ENCODE measurements at regions of chr6 and their contacts with region 1.

Region 1: GRCh38 chr6:26342106-26343004 is 22.6 kb upstream of the BTN3A2 start:
- DNase-seq: peak in 1 of 9 experiments; percentile 37
- ATAC-seq: peak; percentile 18
- H3K4me3 ChIP-seq: peak overlapping the region; percentile 33 to 49
- H3K4me3 Mint-ChIP-seq: peak overlapping the region; percentile 76
- H3K27ac ChIP-seq: peak overlapping the region in 1 of 2 experiments; percentile 52
- H3K27ac Mint-ChIP-seq: peak overlapping the region; percentile 71
- H3K4me1 ChIP-seq: peaks cover 4% of the 10 kb centered on the region
- H3K4me1 Mint-ChIP-seq: peaks cover 6% of the 10 kb centered on the region
- H3K27me3 ChIP-seq: no peaks in the 10 kb centered on the region
- H3K27me3 Mint-ChIP-seq: peaks cover 2% of the 10 kb centered on the region
- CTCF ChIP-seq: no peak

Region 2: GRCh38 chr6:26175428-26176181 is 166.8 kb before region 1 on chr6:
- CTCF ChIA-PET with region 1: no interaction called
- POLR2A ChIA-PET with region 1: no interaction called
- intact Hi-C with region 1: loop called in 1 of 2 experiments (anchors 1 kb)
- DNase-seq: peak in 7 of 9 experiments; percentile 33 to 87 (median 53)
- ATAC-seq: no peak
- H3K4me3 ChIP-seq: no peak overlapping the region
- H3K4me3 Mint-ChIP-seq: peak overlapping the region; percentile 3
- H3K27ac ChIP-seq: no peak overlapping the region
- H3K27ac Mint-ChIP-seq: peak overlapping the region; percentile 63
- H3K4me1 ChIP-seq: peaks cover 26% of the 10 kb centered on the region
- H3K4me1 Mint-ChIP-seq: peaks cover 39% of the 10 kb centered on the region
- H3K27me3 ChIP-seq: no peaks in the 10 kb centered on the region
- H3K27me3 Mint-ChIP-seq: no peaks in the 10 kb centered on the region
- CTCF ChIP-seq: peak; percentile 93

Region 3: GRCh38 chr6:26363882-26364701 is 21.7 kb after region 1 on chr6:
- CTCF ChIA-PET with region 1: interaction called, 18 read pairs
- POLR2A ChIA-PET with region 1: interaction called, 4 read pairs
- intact Hi-C with region 1: no loop called
- DNase-seq: peak in 6 of 9 experiments; percentile 9 to 69 (median 34)
- ATAC-seq: no peak
- H3K4me3 ChIP-seq: peak overlapping the region; percentile 90 to 92
- H3K4me3 Mint-ChIP-seq: no peak overlapping the region
- H3K27ac ChIP-seq: peak overlapping the region; percentile 95
- H3K27ac Mint-ChIP-seq: no peak overlapping the region
- H3K4me1 ChIP-seq: peaks cover 51% of the 10 kb centered on the region
- H3K4me1 Mint-ChIP-seq: peaks cover 53% of the 10 kb centered on the region
- H3K27me3 ChIP-seq: no peaks in the 10 kb centered on the region
- H3K27me3 Mint-ChIP-seq: no peaks in the 10 kb centered on the region
- CTCF ChIP-seq: no peak

Region 4: DNA sequence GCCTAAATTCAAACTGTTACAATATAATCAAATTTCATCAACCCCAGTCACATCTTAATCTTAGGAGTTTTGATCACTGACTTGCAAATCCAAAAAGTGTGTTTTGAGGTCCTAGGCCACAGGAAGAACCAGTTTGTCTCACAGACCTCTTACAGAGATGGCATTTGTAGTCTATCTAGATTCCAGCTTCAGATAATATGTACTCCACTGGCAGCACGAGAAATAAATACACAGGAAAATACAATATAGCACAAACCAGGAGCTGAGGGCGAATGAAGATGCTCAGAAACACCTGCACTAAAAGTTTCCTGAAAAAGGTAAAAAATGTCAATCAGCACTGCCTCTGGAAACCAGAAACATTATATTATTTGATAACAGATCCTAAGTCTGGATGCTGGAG is 97.3 kb after region 1 on chr6:
- CTCF ChIA-PET with region 1: interaction called, 6 read pairs
- POLR2A ChIA-PET with region 1: no interaction called
- intact Hi-C with region 1: loop called in 1 of 2 experiments (anchors 1 kb)
- DNase-seq: peak in 2 of 9 experiments; percentile 20 to 48
- ATAC-seq: no peak
- H3K4me3 ChIP-seq: peak overlapping the region; percentile 84 to 91
- H3K4me3 Mint-ChIP-seq: peak overlapping the region; percentile 100
- H3K27ac ChIP-seq: peak overlapping the region; percentile 95 to 98
- H3K27ac Mint-ChIP-seq: peak overlapping the region; percentile 100
- H3K4me1 ChIP-seq: peaks cover 23% of the 10 kb centered on the region
- H3K4me1 Mint-ChIP-seq: peaks cover 44% of the 10 kb centered on the region
- H3K27me3 ChIP-seq: no peaks in the 10 kb centered on the region
- H3K27me3 Mint-ChIP-seq: no peaks in the 10 kb centered on the region
- CTCF ChIP-seq: no peak

Region 5: DNA sequence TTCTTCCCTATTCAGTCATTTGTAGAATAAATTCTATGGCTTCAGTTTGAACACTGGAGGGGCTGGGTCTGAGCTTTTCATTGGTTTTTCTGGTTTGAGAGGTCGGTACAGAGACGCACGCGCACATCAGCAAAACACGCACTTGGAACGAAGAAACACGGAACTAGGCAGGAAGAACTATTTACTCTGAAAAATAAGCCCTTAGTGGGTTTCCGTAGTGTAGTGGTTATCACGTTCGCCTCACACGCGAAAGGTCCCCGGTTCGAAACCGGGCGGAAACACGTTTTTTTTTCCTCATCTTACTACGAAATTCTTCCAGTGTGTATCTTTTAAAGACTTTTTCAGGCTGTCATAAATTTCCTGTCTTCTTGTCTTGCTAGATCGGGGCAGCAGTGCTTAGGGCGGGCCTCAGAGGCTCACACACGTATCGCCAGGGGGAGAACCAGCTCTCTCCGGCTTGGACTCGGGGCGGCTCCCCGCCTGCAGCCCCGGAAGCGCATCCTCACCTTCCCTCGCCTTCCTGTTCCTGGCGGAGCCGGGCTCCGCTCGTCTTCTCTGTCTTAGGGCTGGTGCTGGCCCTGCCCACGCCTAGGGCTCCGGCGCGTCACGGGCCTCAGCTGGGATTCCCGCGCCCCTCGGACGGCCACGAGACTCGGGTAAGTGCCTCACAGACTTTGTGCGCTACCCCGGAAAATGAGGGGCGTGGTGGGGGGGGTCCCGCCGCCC is 195.7 kb after region 1 on chr6 and contains the start of gene HMGN4:
- CTCF ChIA-PET with region 1: interaction called, 14 read pairs
- POLR2A ChIA-PET with region 1: interaction called, 3 read pairs
- intact Hi-C with region 1: no loop called
- DNase-seq: peak; percentile 65 to 96 (median 79)
- ATAC-seq: peak; percentile 69
- H3K4me3 ChIP-seq: peak within 1 kb of the TSS; percentile 66 to 99
- H3K4me3 Mint-ChIP-seq: peak within 1 kb of the TSS; percentile 89
- H3K27ac ChIP-seq: peak within 1 kb of the TSS; percentile 88 to 93
- H3K27ac Mint-ChIP-seq: peak within 1 kb of the TSS; percentile 92
- H3K4me1 ChIP-seq: peaks cover 32% of the 10 kb centered on the region
- H3K4me1 Mint-ChIP-seq: peaks cover 58% of the 10 kb centered on the region
- H3K27me3 ChIP-seq: no peaks in the 10 kb centered on the region
- H3K27me3 Mint-ChIP-seq: no peaks in the 10 kb centered on the region
- CTCF ChIP-seq: no peak
- total RNA-seq, gene HMGN4: 24.8 to 33.7 TPM

Region 6: DNA sequence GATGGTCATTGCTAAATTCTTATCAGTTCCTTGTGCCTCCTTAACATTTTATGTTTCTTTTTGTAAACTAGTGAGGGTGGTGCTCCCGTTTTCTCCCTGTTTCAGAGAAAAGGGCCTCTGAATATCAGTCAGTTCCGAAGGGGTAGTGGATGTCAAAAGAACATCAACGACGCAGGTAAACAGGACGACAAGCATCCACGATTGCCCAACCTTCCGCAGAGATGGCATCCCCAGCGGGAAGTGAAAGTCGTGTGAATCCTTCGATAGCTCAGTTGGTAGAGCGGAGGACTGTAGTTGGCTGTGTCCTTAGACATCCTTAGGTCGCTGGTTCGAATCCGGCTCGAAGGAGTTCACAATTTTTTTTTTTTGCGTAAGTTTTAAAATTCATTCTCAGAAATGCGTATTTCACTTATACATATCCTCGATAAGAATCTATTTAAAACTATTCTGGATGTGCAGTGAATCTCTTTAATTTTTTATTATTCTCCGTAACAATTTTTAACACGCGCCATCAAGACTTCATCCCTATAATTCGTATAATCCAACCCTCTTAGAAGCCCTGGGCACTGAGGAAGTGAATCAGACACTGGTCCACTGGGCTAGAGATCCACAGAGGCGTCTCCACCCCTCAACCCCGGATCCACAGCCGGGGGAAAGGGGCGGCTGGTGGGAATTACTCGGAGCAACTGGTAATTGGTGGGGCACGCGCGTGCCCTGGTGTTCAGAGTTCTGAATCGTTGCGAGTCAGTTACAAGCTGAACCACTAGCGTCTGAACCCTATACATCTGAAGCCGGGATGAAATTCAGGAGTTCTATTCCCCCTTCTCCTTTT is 226.5 kb after region 1 on chr6:
- CTCF ChIA-PET with region 1: interaction called, 40 read pairs
- POLR2A ChIA-PET with region 1: interaction called, 3 read pairs
- intact Hi-C with region 1: loop called (anchors 1 kb)
- DNase-seq: peak; percentile 95 to 100 (median 99)
- ATAC-seq: peak; percentile 73
- H3K4me3 ChIP-seq: peak overlapping the region; percentile 74 to 90
- H3K4me3 Mint-ChIP-seq: peak overlapping the region; percentile 92
- H3K27ac ChIP-seq: peak overlapping the region; percentile 79 to 80
- H3K27ac Mint-ChIP-seq: peak overlapping the region; percentile 97
- H3K4me1 ChIP-seq: peaks cover 15% of the 10 kb centered on the region
- H3K4me1 Mint-ChIP-seq: peaks cover 20% of the 10 kb centered on the region
- H3K27me3 ChIP-seq: no peaks in the 10 kb centered on the region
- H3K27me3 Mint-ChIP-seq: peaks cover 2% of the 10 kb centered on the region
- CTCF ChIP-seq: peak; percentile 34

Region 7: DNA sequence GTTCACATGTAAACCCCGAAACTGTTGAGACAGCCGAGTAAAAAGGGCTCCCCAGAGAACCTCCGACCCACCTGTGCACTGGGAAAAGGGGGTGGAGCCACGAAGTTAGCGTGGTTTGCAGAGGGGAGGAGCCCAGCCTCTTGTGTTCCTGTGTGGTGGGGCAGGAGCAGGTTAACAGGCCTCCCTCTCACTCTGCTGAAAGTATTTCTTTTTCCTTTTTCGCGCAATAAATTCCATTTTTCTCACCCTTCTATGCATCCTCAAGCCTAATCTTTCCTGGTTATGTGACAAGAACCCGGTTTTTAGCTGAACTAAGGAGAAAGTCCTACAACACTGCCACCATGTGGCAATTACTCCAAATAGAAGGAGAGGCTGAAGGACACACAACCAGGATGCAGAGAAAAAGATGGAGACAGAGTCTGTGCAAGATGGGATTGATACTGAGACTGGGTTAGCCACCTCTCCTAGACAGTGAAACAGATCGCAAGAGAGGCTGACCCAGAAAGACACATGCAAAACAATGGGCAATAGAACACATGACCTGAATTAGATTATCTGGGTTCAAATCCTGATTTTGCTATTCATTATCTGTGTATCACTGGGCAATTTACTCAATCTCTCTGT is 736.5 kb after region 1 on chr6:
- CTCF ChIA-PET with region 1: interaction called, 4 read pairs
- POLR2A ChIA-PET with region 1: no interaction called
- intact Hi-C with region 1: loop called in 1 of 2 experiments (anchors 5 kb)
- DNase-seq: peak in 7 of 9 experiments; percentile 18 to 69 (median 39)
- ATAC-seq: peak; percentile 71
- H3K4me3 ChIP-seq: peak overlapping the region; percentile 16 to 23
- H3K4me3 Mint-ChIP-seq: peak overlapping the region; percentile 62
- H3K27ac ChIP-seq: no peak overlapping the region
- H3K27ac Mint-ChIP-seq: no peak overlapping the region
- H3K4me1 ChIP-seq: no peaks in the 10 kb centered on the region
- H3K4me1 Mint-ChIP-seq: peaks cover 5% of the 10 kb centered on the region
- H3K27me3 ChIP-seq: peaks cover 0 to 2% of the 10 kb centered on the region in 2 experiments
- H3K27me3 Mint-ChIP-seq: peaks cover 44% of the 10 kb centered on the region
- CTCF ChIP-seq: no peak